ENCODE measurements at regions of chr9 and their contacts with region 1.

Region 1: GRCh38 chr9:38671748-38672147 is 48.2 kb downstream of the FAM240B start:
- DNase-seq: no peak
- H3K4me3 ChIP-seq: no peak overlapping the region
- H3K27ac ChIP-seq: no peak overlapping the region
- H3K4me1 ChIP-seq: peaks cover 0 to 6% (median 2%) of the 10 kb centered on the region in 4 donors
- H3K27me3 ChIP-seq: no peaks in the 10 kb centered on the region
- CTCF ChIP-seq: no peak
- EP300 ChIP-seq: no peak
- POLR2A ChIP-seq: no peak

Region 2: GRCh38 chr9:38392235-38393127 is 279.3 kb before region 1 on chr9 and contains the start of gene ALDH1B1:
- intact Hi-C with region 1: no loop called
- DNase-seq: peak; percentile 93
- H3K4me3 ChIP-seq: peak within 1 kb of the TSS; percentile 64 to 88 (median 72)
- H3K27ac ChIP-seq: peak within 1 kb of the TSS; percentile 84 to 97 (median 88)
- H3K4me1 ChIP-seq: peaks cover 0 to 84% (median 59%) of the 10 kb centered on the region in 4 donors
- H3K27me3 ChIP-seq: no peaks in the 10 kb centered on the region
- CTCF ChIP-seq: no peak
- EP300 ChIP-seq: peak in 1 of 4 donors; percentile 7
- POLR2A ChIP-seq: peak; percentile 65 to 75
- total RNA-seq, gene ALDH1B1: 35.7 to 162 (median 101) TPM

Region 3: GRCh38 chr9:38432922-38433510 is 238.7 kb before region 1 on chr9:
- intact Hi-C with region 1: loop called (anchors 10 kb)
- DNase-seq: no peak
- H3K4me3 ChIP-seq: no peak overlapping the region
- H3K27ac ChIP-seq: no peak overlapping the region
- H3K4me1 ChIP-seq: no peaks in the 10 kb centered on the region
- H3K27me3 ChIP-seq: no peaks in the 10 kb centered on the region
- CTCF ChIP-seq: peak in 3 of 4 experiments; percentile 50 to 60 (median 60)
- EP300 ChIP-seq: no peak
- POLR2A ChIP-seq: no peak

Region 4: GRCh38 chr9:38727497-38728001 is 55.8 kb after region 1 on chr9:
- intact Hi-C with region 1: loop called (anchors 5 kb)
- DNase-seq: no peak
- H3K4me3 ChIP-seq: no peak overlapping the region
- H3K27ac ChIP-seq: no peak overlapping the region
- H3K4me1 ChIP-seq: no peaks in the 10 kb centered on the region
- H3K27me3 ChIP-seq: no peaks in the 10 kb centered on the region
- CTCF ChIP-seq: no peak
- EP300 ChIP-seq: no peak
- POLR2A ChIP-seq: no peak